ENCODE measurements at regions of chrX and their contacts with region 1.

Region 1: DNA sequence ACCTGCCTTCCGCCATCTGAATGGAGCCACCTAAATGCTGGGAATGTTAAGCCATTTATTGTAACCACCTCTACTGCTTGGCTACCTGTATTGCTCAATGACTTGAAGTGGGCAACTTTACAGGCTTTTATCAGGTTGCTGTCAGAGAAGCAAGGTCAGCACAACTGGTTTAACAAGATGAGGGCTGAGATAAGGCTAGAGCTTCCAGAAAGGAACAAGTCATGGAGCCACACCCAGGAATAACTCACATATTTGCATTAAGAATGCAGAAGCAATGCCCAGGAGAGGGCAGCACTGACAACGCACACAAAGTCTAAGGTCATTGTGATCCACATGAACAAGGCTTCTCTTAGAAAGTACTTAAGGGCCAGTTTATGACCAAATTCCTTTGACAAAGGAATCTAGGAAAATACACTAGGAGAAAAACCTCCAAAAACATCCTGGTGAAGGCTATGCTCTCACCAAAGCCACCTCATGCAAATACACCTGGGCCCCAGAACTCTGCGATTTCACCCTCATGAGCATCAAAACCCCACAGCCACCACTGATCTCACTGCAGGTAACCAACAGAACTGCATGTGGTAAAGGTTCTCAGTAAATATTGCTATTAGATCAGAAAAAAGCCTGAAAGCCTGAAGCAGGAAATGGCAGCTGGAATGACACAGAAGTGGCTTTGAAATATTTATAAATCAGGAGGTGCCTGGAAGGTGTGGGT is 15.0 kb upstream of the STS start:
- DNase-seq: peak; percentile 69
- H3K4me3 ChIP-seq: peak overlapping the region; percentile 50
- H3K27ac ChIP-seq: peak overlapping the region; percentile 84
- H3K4me1 ChIP-seq: peaks cover 50% of the 10 kb centered on the region
- CTCF ChIP-seq: peak; percentile 77

Region 2: DNA sequence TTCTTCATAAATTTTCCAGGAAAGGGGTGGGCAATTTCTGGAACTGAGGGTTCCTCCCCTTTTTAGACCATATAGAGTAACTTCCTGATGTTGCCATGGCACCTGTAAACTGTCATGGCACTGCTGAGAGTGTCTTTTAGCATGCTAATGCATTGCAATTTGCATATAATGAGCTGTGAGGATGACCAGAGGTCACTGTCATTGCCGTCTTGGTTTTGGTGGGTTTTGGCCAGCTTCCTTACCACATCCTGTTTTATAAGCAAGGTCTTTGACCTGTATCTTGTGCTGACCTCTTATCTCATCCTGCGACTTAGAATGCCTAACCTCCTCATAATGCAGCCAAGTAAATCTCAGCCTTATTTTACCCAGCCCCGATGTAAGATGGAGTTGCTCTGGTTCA is 1481.6 kb before region 1 on chrX:
- CTCF ChIA-PET with region 1: no interaction called
- POLR2A ChIA-PET with region 1: no interaction called
- intact Hi-C with region 1: no loop called
- DNase-seq: no peak
- H3K4me3 ChIP-seq: no peak overlapping the region
- H3K27ac ChIP-seq: no peak overlapping the region
- H3K4me1 ChIP-seq: peaks cover 44% of the 10 kb centered on the region
- CTCF ChIP-seq: no peak

Region 3: GRCh38 chrX:7225338-7225737 is 92.8 kb after region 1 on chrX:
- CTCF ChIA-PET with region 1: no interaction called
- POLR2A ChIA-PET with region 1: interaction called, 4 read pairs
- intact Hi-C with region 1: loop called (anchors 5 kb)
- DNase-seq: no peak
- H3K4me3 ChIP-seq: peak overlapping the region; percentile 85
- H3K27ac ChIP-seq: peak overlapping the region; percentile 90
- H3K4me1 ChIP-seq: peaks cover 85% of the 10 kb centered on the region
- CTCF ChIP-seq: no peak

Measured in OCI-LY7 (cell line).